HepG2 (cell line): ENCODE measurements at regions of chr18 and their contacts with region 1.

Region 1: DNA sequence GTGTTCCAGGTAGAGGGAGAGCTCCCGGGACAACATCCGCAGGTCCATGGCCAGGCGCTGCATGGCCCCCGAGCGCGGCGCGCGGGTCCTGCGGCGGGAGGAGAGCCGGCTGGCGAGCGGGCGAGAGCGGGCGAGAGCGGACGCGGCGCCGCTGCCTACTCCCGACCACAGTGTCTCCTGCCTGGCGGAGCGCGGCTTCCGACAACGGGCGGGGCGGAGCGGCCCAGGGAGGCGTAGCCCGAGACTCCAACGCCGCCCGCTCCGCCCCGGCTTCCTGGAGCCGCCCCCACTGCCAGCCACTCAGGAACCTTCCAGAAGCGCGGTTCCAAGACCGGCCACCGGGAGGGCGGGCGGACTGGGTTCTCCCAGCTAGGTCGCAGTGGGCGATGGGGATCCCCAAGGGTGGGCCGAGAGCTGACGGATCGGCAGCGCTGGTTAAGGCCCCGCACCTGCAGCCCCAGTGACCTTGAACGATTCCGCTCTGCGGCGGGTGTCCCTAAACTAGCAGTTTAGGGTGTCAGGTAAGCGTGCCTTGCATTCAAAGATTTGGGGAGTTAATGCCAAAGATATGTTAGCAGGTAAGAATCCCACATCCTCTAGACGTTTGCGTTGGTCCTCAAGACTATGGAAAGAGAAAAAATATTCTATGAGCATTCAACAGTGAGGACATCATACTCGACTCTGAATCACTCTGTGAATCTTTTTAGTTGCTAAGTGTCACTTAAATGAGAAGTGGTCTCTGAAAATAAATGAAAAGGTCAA is at the start of gene ABHD3:
- DNase-seq: peak; percentile 78
- ATAC-seq: peak; percentile 98
- H3K4me3 ChIP-seq: peak within 1 kb of the TSS; percentile 76 to 90 (median 85)
- H3K27ac ChIP-seq: peak within 1 kb of the TSS; percentile 89
- H3K4me1 ChIP-seq: peaks cover 44% of the 10 kb centered on the region
- H3K27me3 ChIP-seq: no peaks in the 10 kb centered on the region
- CTCF ChIP-seq: peak; percentile 37; the same call in 1 of the 2 replicates
- EP300 ChIP-seq: peak in 1 of 2 experiments; percentile 28; a peak in 1 of 4 replicates
- POLR2A ChIP-seq: peak; percentile 84 to 94
- RAD21 ChIP-seq: peak; percentile 42
- total RNA-seq, gene ABHD3: 14.2 and 32.1 TPM in 2 replicates

Region 2: DNA sequence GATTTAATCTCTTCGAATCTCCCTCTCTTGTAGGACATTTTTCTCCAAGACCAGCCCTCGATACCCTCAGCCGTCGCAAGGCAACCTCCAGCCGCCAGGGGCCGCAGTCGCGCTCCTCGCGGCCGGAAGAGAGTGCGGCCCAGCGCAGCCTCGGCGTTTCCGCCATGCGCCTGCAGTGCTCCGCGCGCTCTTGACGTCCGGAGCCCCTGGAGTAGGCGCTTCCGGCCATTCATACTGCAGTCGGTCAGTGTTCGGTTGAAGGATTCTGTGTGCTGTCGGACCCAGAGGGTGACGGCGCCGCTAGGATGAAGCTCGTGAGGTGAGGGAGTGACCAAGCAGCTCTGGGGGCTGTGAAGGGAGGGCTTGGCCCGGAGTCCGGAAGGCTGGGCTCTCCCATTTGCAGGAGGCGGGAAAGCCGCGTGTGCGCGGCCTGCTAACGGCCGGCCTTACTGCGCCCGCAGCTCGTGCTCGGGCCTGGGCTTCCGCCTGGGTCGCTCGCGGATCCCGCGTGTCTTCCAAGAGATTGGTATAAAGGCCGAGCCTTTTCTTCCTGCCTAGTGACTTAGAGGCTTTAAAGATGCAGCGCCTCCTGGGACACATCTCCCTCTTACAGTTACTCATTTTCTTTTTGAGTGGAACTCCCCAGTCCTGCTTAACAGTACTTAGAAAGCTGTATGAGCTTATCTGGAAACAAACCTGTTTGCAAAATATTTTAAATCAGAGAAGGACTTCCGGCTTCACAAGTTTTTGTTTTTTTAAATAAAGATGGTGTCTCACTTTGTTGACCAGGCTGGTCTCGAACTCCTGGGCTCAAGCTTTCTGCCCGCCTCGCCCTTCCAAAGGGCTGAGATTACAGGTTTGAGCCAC is 92.4 kb before region 1 on chr18 and contains the start of gene SNRPD1:
- CTCF ChIA-PET with region 1: no interaction called
- POLR2A ChIA-PET with region 1: interaction called, 4 read pairs
- in situ Hi-C with region 1: no loop called
- intact Hi-C with region 1: loop called (anchors 5 kb)
- DNase-seq: peak; percentile 86
- ATAC-seq: peak; percentile 99
- H3K4me3 ChIP-seq: peak within 1 kb of the TSS; percentile 67 to 84 (median 81)
- H3K27ac ChIP-seq: peak within 1 kb of the TSS; percentile 93
- H3K4me1 ChIP-seq: peaks cover 31% of the 10 kb centered on the region
- H3K27me3 ChIP-seq: no peaks in the 10 kb centered on the region; a peak in 1 of 5 replicates
- CTCF ChIP-seq: peak; percentile 99
- EP300 ChIP-seq: 0 out of 4 replicates have a peak, but pooled peaks of 1 of the 2 experiments have one; percentile 53
- POLR2A ChIP-seq: peak; percentile 89 to 90
- RAD21 ChIP-seq: peak; percentile 64
- total RNA-seq, gene SNRPD1: 275 and 478 TPM in 2 replicates

Region 3: GRCh38 chr18:21684731-21685130 is 20.1 kb before region 1 on chr18:
- CTCF ChIA-PET with region 1: no interaction called
- POLR2A ChIA-PET with region 1: interaction called, 16 read pairs
- in situ Hi-C with region 1: no loop called
- intact Hi-C with region 1: no loop called
- DNase-seq: peak; percentile 60
- ATAC-seq: peak; percentile 65
- H3K4me3 ChIP-seq: no peak overlapping the region
- H3K27ac ChIP-seq: peak overlapping the region; percentile 92
- H3K4me1 ChIP-seq: peaks cover 58% of the 10 kb centered on the region
- H3K27me3 ChIP-seq: no peaks in the 10 kb centered on the region
- CTCF ChIP-seq: no peak
- EP300 ChIP-seq: peak in 1 of 2 experiments; percentile 70; a peak in 2 of 4 replicates
- POLR2A ChIP-seq: no peak
- RAD21 ChIP-seq: no peak